OCI-LY7 (cell line): ENCODE measurements at regions of chr7 and their contacts with region 1.

Region 1: DNA sequence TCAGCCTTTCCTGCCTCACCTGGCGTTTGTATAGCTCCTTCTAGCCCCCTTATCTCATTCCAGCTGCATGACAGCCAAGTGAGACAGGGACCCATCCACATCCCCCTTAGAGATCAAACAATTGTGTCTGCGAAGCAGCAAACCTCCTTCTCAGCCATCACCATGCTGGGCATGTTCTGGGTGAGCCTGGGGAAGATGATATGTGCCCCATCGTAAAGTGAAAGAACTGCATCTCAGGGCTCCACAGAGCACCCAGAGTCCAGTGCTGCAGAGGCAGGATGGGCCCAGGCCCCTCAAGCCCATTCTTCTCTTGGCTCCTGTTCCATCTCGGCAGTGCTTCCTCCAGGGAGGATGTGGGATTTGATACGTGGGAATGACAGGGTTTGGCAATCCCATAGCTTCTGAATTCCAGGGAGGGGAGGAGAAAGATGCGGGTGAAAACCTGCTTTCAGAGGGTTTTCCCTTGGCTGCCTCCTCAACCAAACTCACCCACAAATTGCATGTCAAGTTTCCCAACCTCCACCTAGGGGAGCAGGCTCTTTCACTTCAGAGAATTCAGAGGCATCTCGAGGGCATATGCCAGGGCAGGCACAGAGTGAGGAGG is 43.1 kb downstream of the FIGNL1 start:
- DNase-seq: no peak
- H3K4me3 ChIP-seq: no peak overlapping the region
- H3K27ac ChIP-seq: no peak overlapping the region
- H3K4me1 ChIP-seq: peaks cover 34% of the 10 kb centered on the region
- CTCF ChIP-seq: no peak

Region 2: GRCh38 chr7:50396856-50397255 is 10.2 kb before region 1 on chr7:
- CTCF ChIA-PET with region 1: no interaction called
- POLR2A ChIA-PET with region 1: interaction called, 3 read pairs
- intact Hi-C with region 1: loop called (anchors 1 kb)
- DNase-seq: no peak
- H3K4me3 ChIP-seq: no peak overlapping the region
- H3K27ac ChIP-seq: no peak overlapping the region
- H3K4me1 ChIP-seq: peaks cover 11% of the 10 kb centered on the region
- CTCF ChIP-seq: no peak